ENCODE measurements at regions of chr20 and their contacts with region 1.

Region 1: DNA sequence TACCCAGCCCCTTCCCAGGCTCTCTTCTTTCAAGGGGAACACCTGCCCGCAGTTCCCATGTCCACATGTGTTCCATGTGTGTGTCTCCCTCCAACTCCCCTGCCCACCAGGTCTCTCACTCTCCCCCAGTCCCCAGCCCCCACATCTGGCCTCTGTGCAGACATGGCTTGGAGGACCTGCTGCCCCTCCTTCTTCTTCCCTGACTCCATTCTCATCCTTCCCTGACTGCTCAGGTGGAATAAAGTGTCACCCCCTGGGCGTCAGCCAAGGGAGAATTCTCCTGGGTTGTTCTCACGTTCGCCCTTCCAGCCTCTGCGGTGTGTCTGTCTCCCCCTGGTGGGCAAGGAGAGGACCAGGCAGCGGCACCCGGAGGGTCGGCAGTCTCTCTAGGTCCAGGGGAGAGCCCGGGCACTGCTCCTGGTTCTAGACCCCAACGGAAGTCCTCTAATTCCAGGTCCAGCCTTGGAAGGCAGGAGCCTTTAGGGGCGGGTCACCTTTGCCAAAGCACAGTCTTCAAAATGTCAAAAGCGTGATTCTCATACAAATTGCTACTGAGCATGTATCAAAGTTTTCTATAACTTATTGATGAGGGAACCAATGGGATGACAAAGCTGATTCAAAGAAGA is 50.5 kb downstream of the EBF4 start:
- DNase-seq: peak in 34 of 35 experiments; percentile 40 to 88 (median 64)
- ATAC-seq: peak; percentile 63 to 72 (median 70)
- H3K4me3 ChIP-seq: no peak overlapping the region
- H3K4me3 Mint-ChIP-seq: peak overlapping the region; percentile 54 to 66 (median 58)
- H3K27ac ChIP-seq: peak overlapping the region; percentile 71
- H3K27ac Mint-ChIP-seq: peak overlapping the region; percentile 95 to 97
- H3K4me1 ChIP-seq: peaks cover 26 to 50% of the 10 kb centered on the region in 2 experiments
- H3K4me1 Mint-ChIP-seq: peaks cover 50 to 52% (median 50%) of the 10 kb centered on the region in 3 donors
- H3K27me3 ChIP-seq: peaks cover 0 to 5% of the 10 kb centered on the region in 2 experiments
- H3K27me3 Mint-ChIP-seq: peaks cover 0 to 1% of the 10 kb centered on the region in 2 donors

Region 2: GRCh38 chr20:2651772-2652723 is 91.0 kb before region 1 on chr20 and contains the start of gene NOP56:
- CTCF ChIA-PET with region 1: interaction called in 1 of 2 experiments, 3 read pairs
- POLR2A ChIA-PET with region 1: interaction called in 1 of 2 experiments, 10 read pairs
- DNase-seq: peak; percentile 78 to 97 (median 91)
- ATAC-seq: peak; percentile 86 to 94 (median 90)
- H3K4me3 ChIP-seq: peak within 1 kb of the TSS; percentile 80 to 82
- H3K4me3 Mint-ChIP-seq: peak within 1 kb of the TSS; percentile 85 to 90 (median 86)
- H3K27ac ChIP-seq: peak within 1 kb of the TSS; percentile 32
- H3K27ac Mint-ChIP-seq: peak within 1 kb of the TSS; percentile 88 to 90
- H3K4me1 ChIP-seq: peaks cover 17 to 31% of the 10 kb centered on the region in 2 experiments
- H3K4me1 Mint-ChIP-seq: peaks cover 38 to 51% (median 44%) of the 10 kb centered on the region in 3 donors
- H3K27me3 ChIP-seq: no peaks in the 10 kb centered on the region
- H3K27me3 Mint-ChIP-seq: no peaks in the 10 kb centered on the region
- total RNA-seq, gene NOP56: 243 to 279 (median 270) TPM

Region 3: DNA sequence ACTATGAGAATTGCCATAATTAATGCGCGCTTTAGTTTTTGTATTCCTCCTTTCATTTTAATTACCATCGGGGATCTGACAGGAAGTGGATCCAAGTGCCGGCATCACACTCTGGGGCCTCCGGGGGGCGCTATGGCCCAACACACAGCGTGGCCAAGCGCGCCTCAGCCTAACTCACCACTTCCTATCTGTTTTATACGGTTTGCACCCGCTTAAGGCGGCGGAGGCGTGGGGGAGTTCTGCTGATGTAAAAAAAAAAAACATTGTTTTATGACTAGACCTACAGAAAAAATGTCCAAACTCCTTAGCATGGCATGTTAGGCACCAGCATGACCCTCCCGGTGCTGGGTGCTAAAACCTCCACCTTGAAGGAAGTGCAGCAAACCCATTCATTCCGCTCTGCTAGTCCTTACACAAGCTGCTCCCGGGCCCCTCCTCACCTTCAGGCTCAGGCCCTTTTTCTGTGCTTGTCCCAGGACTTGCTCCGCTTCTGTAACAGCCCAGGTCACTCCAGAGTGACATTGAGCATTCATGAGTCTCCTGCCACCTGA is 54.9 kb before region 1 on chr20:
- CTCF ChIA-PET with region 1: interaction called, 8 to 19 read pairs
- POLR2A ChIA-PET with region 1: interaction called in 1 of 2 experiments, 3 read pairs
- DNase-seq: peak; percentile 64 to 91 (median 81)
- ATAC-seq: peak; percentile 77 to 87 (median 80)
- H3K4me3 ChIP-seq: peak overlapping the region in 1 of 2 donors; percentile 11
- H3K4me3 Mint-ChIP-seq: peak overlapping the region in 2 of 3 donors; percentile 17 to 32
- H3K27ac ChIP-seq: no peak overlapping the region
- H3K27ac Mint-ChIP-seq: peak overlapping the region; percentile 39 to 66
- H3K4me1 ChIP-seq: peaks cover 0 to 23% of the 10 kb centered on the region in 2 experiments
- H3K4me1 Mint-ChIP-seq: peaks cover 23 to 30% (median 29%) of the 10 kb centered on the region in 3 donors
- H3K27me3 ChIP-seq: peaks cover 4 to 39% of the 10 kb centered on the region in 2 experiments
- H3K27me3 Mint-ChIP-seq: peaks cover 8 to 23% of the 10 kb centered on the region in 2 donors

Region 4: DNA sequence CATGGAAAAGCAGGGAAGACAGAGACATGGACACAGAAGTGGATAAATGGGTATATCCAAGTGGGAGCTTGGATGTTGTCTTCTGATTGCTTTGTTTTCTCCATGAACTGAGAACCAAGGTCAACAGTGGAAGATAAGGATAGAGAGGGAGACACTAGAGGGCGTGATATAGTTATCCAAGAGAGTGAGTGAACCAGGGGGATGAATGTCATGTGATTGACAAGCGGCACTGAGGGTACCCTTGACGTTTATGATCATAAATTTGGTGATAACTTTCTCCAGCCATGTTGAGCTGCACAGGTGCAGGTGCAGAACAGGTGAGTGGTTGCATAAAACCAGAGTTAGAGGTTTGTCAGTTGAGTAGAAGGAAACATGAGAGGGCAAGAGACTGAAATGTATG is 29.8 kb before region 1 on chr20:
- CTCF ChIA-PET with region 1: interaction called, 11 to 24 read pairs
- POLR2A ChIA-PET with region 1: interaction called in 1 of 2 experiments, 4 read pairs
- DNase-seq: peak in 2 of 35 experiments; percentile 25 to 70
- ATAC-seq: peak; percentile 75 to 92 (median 82)
- H3K4me3 ChIP-seq: no peak overlapping the region
- H3K4me3 Mint-ChIP-seq: no peak overlapping the region
- H3K27ac ChIP-seq: no peak overlapping the region
- H3K27ac Mint-ChIP-seq: no peak overlapping the region
- H3K4me1 ChIP-seq: no peaks in the 10 kb centered on the region
- H3K4me1 Mint-ChIP-seq: peaks cover 0 to 2% (median 0%) of the 10 kb centered on the region in 3 donors
- H3K27me3 ChIP-seq: peaks cover 0 to 11% of the 10 kb centered on the region in 2 experiments
- H3K27me3 Mint-ChIP-seq: peaks cover 0 to 5% of the 10 kb centered on the region in 2 donors

Region 5: GRCh38 chr20:2729251-2729713 is 13.8 kb before region 1 on chr20:
- CTCF ChIA-PET with region 1: interaction called, 9 to 52 read pairs
- POLR2A ChIA-PET with region 1: interaction called, 8 to 9 read pairs
- DNase-seq: peak in 25 of 35 experiments; percentile 25 to 70 (median 42)
- ATAC-seq: peak; percentile 98 to 99 (median 98)
- H3K4me3 ChIP-seq: no peak overlapping the region
- H3K4me3 Mint-ChIP-seq: peak overlapping the region in 2 of 3 donors; percentile 42 to 58
- H3K27ac ChIP-seq: peak overlapping the region; percentile 64
- H3K27ac Mint-ChIP-seq: peak overlapping the region; percentile 91 to 96
- H3K4me1 ChIP-seq: peaks cover 17 to 26% of the 10 kb centered on the region in 2 experiments
- H3K4me1 Mint-ChIP-seq: peaks cover 29 to 31% (median 31%) of the 10 kb centered on the region in 3 donors
- H3K27me3 ChIP-seq: peaks cover 0 to 3% of the 10 kb centered on the region in 2 experiments
- H3K27me3 Mint-ChIP-seq: peaks cover 0 to 6% of the 10 kb centered on the region in 2 donors